ENCODE measurements at regions of chrX and their contacts with region 1.

Region 1: DNA sequence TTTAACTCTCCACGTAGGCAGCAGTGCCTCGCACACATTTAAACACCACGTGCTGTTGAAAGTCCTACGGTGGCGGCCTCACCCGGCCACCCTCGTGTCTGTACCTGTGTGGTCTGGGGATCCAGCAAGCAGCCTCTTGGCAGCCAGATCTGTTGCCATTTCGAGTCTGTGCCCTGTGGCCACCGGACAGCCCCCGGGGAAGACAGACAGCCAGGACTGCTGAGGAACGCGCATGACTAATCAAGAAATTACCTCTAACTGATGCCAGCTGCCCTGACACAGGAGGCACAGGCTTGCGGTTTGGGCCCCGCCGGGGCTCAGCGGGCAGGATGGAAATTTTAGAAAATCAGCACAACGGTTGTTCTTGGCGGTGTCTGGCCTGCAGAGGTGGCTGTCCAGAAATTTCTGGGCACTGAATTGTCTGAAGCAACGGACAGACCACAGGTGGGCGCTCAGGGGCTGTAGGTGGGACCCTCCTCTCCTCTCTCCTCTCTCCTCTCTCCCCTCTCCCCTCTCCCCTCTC is 15.6 kb upstream of the ASMTL start:
- DNase-seq: peak; percentile 96
- H3K4me3 ChIP-seq: peak overlapping the region; percentile 55
- H3K27ac ChIP-seq: peak overlapping the region; percentile 97
- H3K4me1 ChIP-seq: peaks cover 88% of the 10 kb centered on the region
- CTCF ChIP-seq: peak; percentile 67

Region 2: GRCh38 chrX:1481636-1482529 is 13.6 kb after region 1 on chrX:
- CTCF ChIA-PET with region 1: no interaction called
- POLR2A ChIA-PET with region 1: no interaction called
- intact Hi-C with region 1: loop called (anchors 1 kb)
- DNase-seq: peak; percentile 98
- H3K4me3 ChIP-seq: peak overlapping the region; percentile 54
- H3K27ac ChIP-seq: peak overlapping the region; percentile 100
- H3K4me1 ChIP-seq: peaks cover 96% of the 10 kb centered on the region
- CTCF ChIP-seq: no peak

Region 3: GRCh38 chrX:1502241-1502640 is 33.9 kb after region 1 on chrX:
- CTCF ChIA-PET with region 1: no interaction called
- POLR2A ChIA-PET with region 1: no interaction called
- intact Hi-C with region 1: loop called (anchors 1 kb)
- DNase-seq: peak; percentile 98
- H3K4me3 ChIP-seq: peak overlapping the region; percentile 33
- H3K27ac ChIP-seq: peak overlapping the region; percentile 96
- H3K4me1 ChIP-seq: peaks cover 91% of the 10 kb centered on the region
- CTCF ChIP-seq: no peak

Region 4: DNA sequence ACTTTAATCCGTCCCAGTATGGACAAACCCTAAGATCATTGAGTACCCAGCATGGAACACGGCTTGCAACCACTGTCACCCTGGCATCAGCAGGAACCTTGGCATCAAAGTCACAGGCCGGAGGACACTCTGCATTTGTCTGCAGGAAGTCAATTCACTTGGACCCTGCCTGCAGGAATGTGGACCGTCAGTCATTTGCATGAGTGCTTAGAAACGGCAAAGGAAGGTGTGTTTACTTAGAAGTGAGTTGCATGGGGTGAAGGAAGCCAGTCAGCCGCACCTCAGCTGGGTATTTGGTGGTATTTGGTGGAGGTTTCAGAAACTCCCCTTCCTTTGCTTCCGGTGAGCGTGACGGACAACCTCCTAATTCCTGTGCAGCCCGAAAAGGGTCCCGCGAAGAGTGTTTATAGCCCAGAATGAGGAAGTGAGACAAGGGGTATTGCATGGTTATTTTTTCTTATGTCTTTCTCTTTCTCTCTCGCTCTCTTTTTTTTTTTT is 53.2 kb after region 1 on chrX:
- CTCF ChIA-PET with region 1: no interaction called
- POLR2A ChIA-PET with region 1: no interaction called
- intact Hi-C with region 1: loop called (anchors 1 kb)
- DNase-seq: peak; percentile 99
- H3K4me3 ChIP-seq: peak overlapping the region; percentile 58
- H3K27ac ChIP-seq: peak overlapping the region; percentile 91
- H3K4me1 ChIP-seq: peaks cover 67% of the 10 kb centered on the region
- CTCF ChIP-seq: no peak

Region 5: GRCh38 chrX:1580735-1581531 is 112.6 kb after region 1 on chrX:
- CTCF ChIA-PET with region 1: no interaction called
- POLR2A ChIA-PET with region 1: no interaction called
- intact Hi-C with region 1: loop called (anchors 1 kb)
- DNase-seq: peak; percentile 85
- H3K4me3 ChIP-seq: no peak overlapping the region
- H3K27ac ChIP-seq: no peak overlapping the region
- H3K4me1 ChIP-seq: peaks cover 16% of the 10 kb centered on the region
- CTCF ChIP-seq: peak; percentile 90

Region 6: GRCh38 chrX:1618689-1619088 is 150.4 kb after region 1 on chrX:
- CTCF ChIA-PET with region 1: no interaction called
- POLR2A ChIA-PET with region 1: no interaction called
- intact Hi-C with region 1: no loop called
- DNase-seq: no peak
- H3K4me3 ChIP-seq: no peak overlapping the region
- H3K27ac ChIP-seq: no peak overlapping the region
- H3K4me1 ChIP-seq: peaks cover 18% of the 10 kb centered on the region
- CTCF ChIP-seq: no peak

Region 7: DNA sequence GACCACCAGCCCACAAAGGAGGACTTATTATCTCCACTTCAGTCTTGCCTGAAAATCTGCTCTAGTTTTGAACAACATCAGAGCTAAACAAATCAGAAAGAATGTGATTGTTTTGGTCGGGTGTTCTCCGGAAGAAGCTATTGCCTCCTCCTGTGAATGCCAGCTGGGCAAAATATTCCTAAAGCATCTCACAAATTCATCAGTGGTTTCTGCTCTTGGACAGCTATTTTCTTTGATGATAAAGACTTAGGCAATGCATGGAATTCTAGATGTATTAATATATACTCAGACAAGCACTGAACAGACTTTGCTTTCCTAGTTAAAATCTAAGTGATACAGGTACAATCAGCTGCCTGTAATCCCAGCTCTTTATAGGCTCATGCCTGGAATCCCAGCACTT is 218.3 kb after region 1 on chrX:
- CTCF ChIA-PET with region 1: no interaction called
- POLR2A ChIA-PET with region 1: no interaction called
- intact Hi-C with region 1: no loop called
- DNase-seq: no peak
- H3K4me3 ChIP-seq: no peak overlapping the region
- H3K27ac ChIP-seq: no peak overlapping the region
- H3K4me1 ChIP-seq: no peaks in the 10 kb centered on the region
- CTCF ChIP-seq: no peak

Measured in OCI-LY7 (cell line).